Sigmoid colon (tissue), 7 donors: ENCODE measurements at regions of chr15 and their contacts with region 1.

Region 1: GRCh38 chr15:63041974-63042819 is at the start of gene TPM1:
- DNase-seq: peak; percentile 97
- H3K4me3 ChIP-seq: peak within 1 kb of the TSS; percentile 78 to 90 (median 87)
- H3K27ac ChIP-seq: peak within 1 kb of the TSS; percentile 97 to 99 (median 98)
- H3K4me1 ChIP-seq: peaks cover 0 to 14% (median 5%) of the 10 kb centered on the region in 4 donors
- H3K27me3 ChIP-seq: no peaks in the 10 kb centered on the region
- CTCF ChIP-seq: peak in 1 of 4 experiments; percentile 11
- EP300 ChIP-seq: peak in 3 of 4 donors; percentile 15 to 67 (median 44)
- POLR2A ChIP-seq: peak; percentile 49 to 79
- total RNA-seq, gene TPM1: 2,634 to 4,179 (median 3,850) TPM

Region 2: DNA sequence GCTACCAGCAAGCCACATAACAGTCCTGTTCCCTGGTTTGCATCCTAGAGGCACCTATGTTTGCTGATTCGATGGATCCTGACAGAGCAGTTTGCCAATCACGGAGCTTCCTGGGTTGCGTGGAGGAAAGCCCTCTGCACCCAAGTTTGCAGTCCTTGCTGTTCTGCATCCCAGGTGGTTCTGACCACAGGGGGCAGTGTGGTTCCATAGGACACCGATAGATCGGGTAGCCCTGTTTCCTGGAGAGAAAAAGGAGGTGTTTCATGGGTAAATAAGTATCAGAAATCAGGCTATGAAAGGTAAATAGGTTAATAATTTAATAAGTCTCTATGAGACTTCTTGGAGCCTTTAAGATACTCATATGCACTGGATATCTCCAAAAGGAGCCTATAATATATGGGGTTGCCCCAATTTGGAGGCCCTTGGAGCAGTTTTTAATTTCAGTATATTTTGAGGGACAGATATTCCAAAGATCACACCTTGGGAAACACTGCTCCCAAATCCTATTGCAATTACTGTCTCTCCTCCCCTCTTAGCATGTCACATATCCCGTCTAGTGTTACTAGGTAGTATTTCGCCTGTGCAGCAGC is 194.2 kb before region 1 on chr15:
- intact Hi-C with region 1: loop called (anchors 2 kb)
- DNase-seq: peak; percentile 90
- H3K4me3 ChIP-seq: no peak overlapping the region
- H3K27ac ChIP-seq: peak overlapping the region; percentile 44 to 82 (median 64)
- H3K4me1 ChIP-seq: peaks cover 0 to 62% (median 38%) of the 10 kb centered on the region in 4 donors
- H3K27me3 ChIP-seq: no peaks in the 10 kb centered on the region
- CTCF ChIP-seq: peak; percentile 56 to 84 (median 64)
- EP300 ChIP-seq: no peak
- POLR2A ChIP-seq: no peak

Region 3: GRCh38 chr15:62879770-62880169 is 162.4 kb before region 1 on chr15:
- intact Hi-C with region 1: loop called (anchors 5 kb)
- DNase-seq: no peak
- H3K4me3 ChIP-seq: peak overlapping the region in 3 of 4 donors; percentile 19 to 39 (median 22)
- H3K27ac ChIP-seq: peak overlapping the region; percentile 59 to 93 (median 88)
- H3K4me1 ChIP-seq: peaks cover 0 to 92% (median 62%) of the 10 kb centered on the region in 4 donors
- H3K27me3 ChIP-seq: no peaks in the 10 kb centered on the region
- CTCF ChIP-seq: no peak
- EP300 ChIP-seq: no peak
- POLR2A ChIP-seq: no peak

Region 4: GRCh38 chr15:62899090-62899493 is 143.1 kb before region 1 on chr15:
- intact Hi-C with region 1: loop called (anchors 1 kb)
- DNase-seq: peak; percentile 93
- H3K4me3 ChIP-seq: no peak overlapping the region
- H3K27ac ChIP-seq: peak overlapping the region; percentile 85 to 96 (median 90)
- H3K4me1 ChIP-seq: peaks cover 0 to 76% (median 71%) of the 10 kb centered on the region in 4 donors
- H3K27me3 ChIP-seq: no peaks in the 10 kb centered on the region
- CTCF ChIP-seq: no peak
- EP300 ChIP-seq: peak; percentile 99 to 100 (median 100)
- POLR2A ChIP-seq: no peak